SK-N-SH (cell line): ENCODE measurements at regions of chr6 and their contacts with region 1.

Region 1: GRCh38 chr6:34027445-34027936 is 118.4 kb downstream of the GRM4 start:
- DNase-seq: peak; percentile 88
- H3K4me3 ChIP-seq: no peak overlapping the region
- H3K27ac ChIP-seq: no peak overlapping the region
- H3K4me1 ChIP-seq: peaks cover 0 to 21% of the 10 kb centered on the region in 2 experiments; a peak in 1 of 4 replicates
- H3K27me3 ChIP-seq: no peaks in the 10 kb centered on the region; the same call in 1 of the 2 replicates
- CTCF ChIP-seq: peak; percentile 77
- EP300 ChIP-seq: no peak
- RAD21 ChIP-seq: peak; percentile 70

Region 2: DNA sequence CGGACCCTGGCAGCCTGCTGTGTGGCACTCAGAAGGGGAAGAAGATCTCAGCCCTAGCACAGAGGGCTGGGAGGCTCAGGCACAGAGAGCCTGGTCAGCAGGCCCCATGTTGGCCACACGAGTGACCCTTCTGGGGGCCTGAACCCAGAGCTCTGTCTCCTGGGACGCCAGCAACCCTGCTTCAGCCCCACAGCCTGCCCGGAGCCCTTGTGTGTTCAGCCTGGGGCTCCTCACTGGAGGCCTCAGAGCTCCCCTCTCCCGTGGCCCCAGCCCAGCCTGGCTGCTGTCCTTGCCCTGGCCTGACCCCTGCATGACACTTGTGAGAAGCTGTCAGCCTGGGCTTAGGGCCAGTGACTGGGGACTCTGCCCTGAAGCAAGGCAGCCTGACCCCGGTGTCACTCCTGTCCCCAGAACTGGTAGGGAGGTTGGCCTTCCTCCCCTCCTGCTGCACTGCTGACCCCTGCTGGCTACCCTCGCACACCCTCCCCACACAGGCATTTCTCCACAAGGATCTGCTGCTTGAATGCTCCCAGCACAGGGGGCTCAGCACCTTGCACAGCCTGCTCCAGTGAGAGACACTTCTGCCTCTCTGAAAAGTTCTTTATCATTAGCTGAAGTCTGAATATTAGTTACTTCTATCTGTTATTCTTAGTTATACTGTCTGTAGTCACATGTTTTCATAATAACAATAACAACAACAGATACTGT is 265.4 kb before region 1 on chr6:
- CTCF ChIA-PET with region 1: interaction called, 184 read pairs
- POLR2A ChIA-PET with region 1: interaction called, 3 read pairs
- DNase-seq: peak; percentile 71
- H3K4me3 ChIP-seq: no peak overlapping the region
- H3K27ac ChIP-seq: peak overlapping the region in 1 of 2 experiments; percentile 56; a peak in 2 of 4 replicates
- H3K4me1 ChIP-seq: peaks cover 0 to 19% of the 10 kb centered on the region in 2 experiments; a peak in 1 of 4 replicates
- H3K27me3 ChIP-seq: no peaks in the 10 kb centered on the region
- CTCF ChIP-seq: peak; percentile 59
- EP300 ChIP-seq: no peak
- RAD21 ChIP-seq: peak; percentile 72

Region 3: DNA sequence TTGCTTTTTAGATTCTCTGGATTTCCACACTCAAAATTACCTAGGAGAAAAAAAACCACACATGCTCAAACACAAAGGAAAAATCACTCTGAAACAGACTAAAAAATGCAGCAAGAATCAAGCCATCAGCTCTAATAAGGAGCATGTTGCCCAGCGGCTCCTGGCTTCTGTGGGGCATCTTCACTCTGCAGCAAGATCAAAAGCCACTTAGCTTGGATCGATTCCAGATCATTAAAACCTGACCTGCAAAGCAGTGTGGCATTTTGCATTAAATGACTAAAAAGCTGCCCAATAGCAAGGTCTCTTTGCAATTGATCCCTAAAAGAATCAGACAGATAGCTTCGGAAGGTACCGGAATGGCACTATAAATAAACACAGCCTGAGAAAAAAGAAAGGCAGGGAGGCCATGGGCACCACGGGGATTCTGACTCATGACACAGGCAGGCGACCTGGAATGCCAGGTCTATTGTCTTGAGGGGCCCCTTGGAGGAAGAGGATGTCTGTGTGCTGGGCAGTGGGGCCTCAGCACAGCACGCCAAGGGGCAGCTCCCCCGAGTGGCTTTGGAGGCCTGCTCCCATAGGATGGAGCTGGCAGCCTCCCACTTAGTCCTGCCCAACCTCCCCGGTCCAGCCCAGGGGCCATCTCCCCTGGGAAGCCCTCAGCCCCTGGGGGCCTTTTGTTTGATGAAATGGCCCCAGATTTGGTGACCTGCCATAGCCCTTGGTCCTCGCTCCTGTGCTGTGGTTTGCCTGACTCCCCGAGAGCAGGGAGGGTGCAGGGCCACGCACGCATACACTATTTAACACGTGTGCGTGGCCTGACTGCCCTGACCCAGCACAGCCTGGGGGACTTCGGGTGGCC is 246.1 kb before region 1 on chr6:
- CTCF ChIA-PET with region 1: interaction called, 19 read pairs
- POLR2A ChIA-PET with region 1: no interaction called
- DNase-seq: no peak
- H3K4me3 ChIP-seq: no peak overlapping the region
- H3K27ac ChIP-seq: peak overlapping the region; percentile 73 to 79
- H3K4me1 ChIP-seq: peaks cover 25 to 36% of the 10 kb centered on the region in 2 experiments
- H3K27me3 ChIP-seq: no peaks in the 10 kb centered on the region
- CTCF ChIP-seq: no peak
- EP300 ChIP-seq: peak in 1 of 2 experiments; percentile 62; a peak in 1 of 4 replicates
- RAD21 ChIP-seq: no peak

Region 4: GRCh38 chr6:33958526-33959333 is 68.8 kb before region 1 on chr6:
- CTCF ChIA-PET with region 1: interaction called, 25 read pairs
- POLR2A ChIA-PET with region 1: no interaction called
- DNase-seq: peak; percentile 56
- H3K4me3 ChIP-seq: no peak overlapping the region; a peak in 1 of 4 replicates
- H3K27ac ChIP-seq: no peak overlapping the region
- H3K4me1 ChIP-seq: peaks cover 0 to 10% of the 10 kb centered on the region in 2 experiments; a peak in 1 of 4 replicates
- H3K27me3 ChIP-seq: no peaks in the 10 kb centered on the region
- CTCF ChIP-seq: peak; percentile 40
- EP300 ChIP-seq: no peak
- RAD21 ChIP-seq: no peak; the same call in 1 of the 2 replicates

Region 5: GRCh38 chr6:34044945-34045595 is 17.6 kb after region 1 on chr6:
- CTCF ChIA-PET with region 1: interaction called, 12 read pairs
- POLR2A ChIA-PET with region 1: no interaction called
- DNase-seq: no peak
- H3K4me3 ChIP-seq: no peak overlapping the region
- H3K27ac ChIP-seq: peak overlapping the region in 1 of 2 experiments; percentile 31; a peak in 1 of 4 replicates
- H3K4me1 ChIP-seq: peaks cover 0 to 20% of the 10 kb centered on the region in 2 experiments; a peak in 1 of 4 replicates
- H3K27me3 ChIP-seq: peaks cover 14% of the 10 kb centered on the region; the same call in 1 of the 2 replicates
- CTCF ChIP-seq: no peak
- EP300 ChIP-seq: no peak
- RAD21 ChIP-seq: no peak

Region 6: GRCh38 chr6:34145161-34146020 is 117.9 kb after region 1 on chr6:
- CTCF ChIA-PET with region 1: interaction called, 13 read pairs
- POLR2A ChIA-PET with region 1: no interaction called
- DNase-seq: peak; percentile 78
- H3K4me3 ChIP-seq: peak overlapping the region; percentile 42 to 56
- H3K27ac ChIP-seq: no peak overlapping the region
- H3K4me1 ChIP-seq: peaks cover 0 to 20% of the 10 kb centered on the region in 2 experiments; a peak in 2 of 4 replicates
- H3K27me3 ChIP-seq: peaks cover 67% of the 10 kb centered on the region
- CTCF ChIP-seq: no peak
- EP300 ChIP-seq: no peak
- RAD21 ChIP-seq: no peak

Region 7: DNA sequence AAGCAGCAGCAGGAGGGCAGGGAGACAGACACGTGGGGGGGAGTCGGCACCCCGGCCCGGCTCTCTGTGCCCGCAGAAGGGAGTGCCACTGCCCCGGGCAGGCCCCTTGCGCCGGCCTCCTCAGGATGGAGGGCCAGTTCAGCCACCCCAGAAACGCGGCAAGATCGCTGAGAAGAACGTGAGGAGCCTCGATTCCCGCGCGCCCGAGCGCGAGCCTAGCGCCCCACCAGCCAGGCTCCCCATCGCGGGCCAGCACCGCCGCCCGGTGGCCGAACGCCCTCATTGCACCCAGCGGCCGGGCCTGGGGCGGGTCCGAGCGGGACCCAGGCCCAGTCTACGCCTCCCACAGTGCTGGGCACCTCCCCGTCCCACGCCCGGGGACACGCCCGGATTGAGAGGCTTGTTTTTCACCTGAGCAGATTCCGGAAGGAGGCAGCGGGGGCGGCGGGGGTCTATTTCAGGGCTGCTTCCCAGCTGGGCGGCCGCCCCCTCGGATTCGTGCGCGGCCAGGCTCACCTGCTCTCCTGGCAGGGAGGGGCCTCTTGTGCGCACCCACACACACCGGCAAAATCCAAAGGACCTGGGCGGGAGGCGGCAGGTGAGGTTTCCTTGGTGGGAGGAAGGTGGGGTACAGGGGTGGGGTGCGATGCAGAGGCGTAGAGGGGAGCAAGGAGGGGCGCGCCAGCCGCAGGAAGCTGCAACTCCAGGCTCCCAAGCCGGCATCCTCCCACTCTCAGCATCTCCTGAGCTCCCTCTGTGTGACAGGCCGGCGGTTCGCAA is 127.4 kb after region 1 on chr6:
- CTCF ChIA-PET with region 1: interaction called, 24 read pairs
- POLR2A ChIA-PET with region 1: no interaction called
- DNase-seq: peak; percentile 98
- H3K4me3 ChIP-seq: peak overlapping the region; percentile 17 to 59; a peak in 2 of 4 replicates
- H3K27ac ChIP-seq: no peak overlapping the region
- H3K4me1 ChIP-seq: peaks cover 0 to 2% of the 10 kb centered on the region in 2 experiments; a peak in 1 of 4 replicates
- H3K27me3 ChIP-seq: peaks cover 25% of the 10 kb centered on the region
- CTCF ChIP-seq: peak; percentile 89
- EP300 ChIP-seq: no peak
- RAD21 ChIP-seq: peak; percentile 95